HAP-1 (cell line): ENCODE measurements at regions of chr9 and their contacts with region 1.

Region 1: GRCh38 chr9:125099816-125100215 is 43.5 kb downstream of the SCAI start:
- DNase-seq: no peak
- H3K4me3 ChIP-seq: no peak overlapping the region
- H3K4me1 ChIP-seq: no peaks in the 10 kb centered on the region
- H3K27me3 ChIP-seq: no peaks in the 10 kb centered on the region

Region 2: DNA sequence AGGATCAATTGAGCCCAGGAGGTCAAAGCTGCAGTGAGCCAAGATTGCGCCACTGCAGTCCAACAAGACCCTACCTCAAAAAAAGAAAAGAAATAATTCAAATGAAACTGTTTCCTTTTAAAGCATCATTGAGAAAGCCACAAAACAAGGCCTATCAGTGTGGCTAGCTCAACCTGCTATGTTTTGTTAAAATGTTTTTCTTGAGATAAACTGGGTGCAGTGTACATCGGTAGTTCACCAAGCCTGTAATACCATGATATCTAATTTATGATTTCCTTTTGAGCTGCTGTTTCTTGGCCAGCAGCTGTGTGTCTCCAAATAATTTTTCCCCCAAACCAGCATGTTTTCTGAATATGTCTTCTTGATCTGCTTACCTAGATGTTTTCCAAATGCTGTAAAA is 61.6 kb before region 1 on chr9:
- in situ Hi-C with region 1: loop called (anchors 10 kb)
- DNase-seq: no peak
- H3K4me3 ChIP-seq: no peak overlapping the region
- H3K4me1 ChIP-seq: no peaks in the 10 kb centered on the region
- H3K27me3 ChIP-seq: no peaks in the 10 kb centered on the region